Naive thymus-derived CD4-positive, alpha-beta T cell (primary cell): ENCODE measurements at regions of chr19 and their contacts with region 1.

Region 1: GRCh38 chr19:4968462-4969291 is at the start of gene KDM4B:
- DNase-seq: peak; percentile 97 to 100 (median 99)
- ATAC-seq: peak; percentile 94
- H3K4me3 ChIP-seq: peak within 1 kb of the TSS; percentile 69
- H3K4me3 Mint-ChIP-seq: peak within 1 kb of the TSS; percentile 88 to 97 (median 94)
- H3K27ac ChIP-seq: peak within 1 kb of the TSS; percentile 67
- H3K27ac Mint-ChIP-seq: peak within 1 kb of the TSS; percentile 84 to 96 (median 91)
- H3K4me1 ChIP-seq: peaks cover 26 to 29% of the 10 kb centered on the region in 2 donors
- H3K4me1 Mint-ChIP-seq: peaks cover 26 to 40% (median 32%) of the 10 kb centered on the region in 7 donors
- H3K27me3 ChIP-seq: no peaks in the 10 kb centered on the region
- H3K27me3 Mint-ChIP-seq: no peaks in the 10 kb centered on the region
- total RNA-seq, gene KDM4B: 45.8 to 78.0 (median 65.8) TPM

Region 2: GRCh38 chr19:4669723-4670480 is 298.8 kb before region 1 on chr19 and contains the start of gene MYDGF:
- CTCF ChIA-PET with region 1: no interaction called
- POLR2A ChIA-PET with region 1: no interaction called
- intact Hi-C with region 1: loop called in 1 of 2 experiments (anchors 2 kb)
- DNase-seq: peak; percentile 86 to 95 (median 92)
- ATAC-seq: peak; percentile 100
- H3K4me3 ChIP-seq: peak within 1 kb of the TSS; percentile 65
- H3K4me3 Mint-ChIP-seq: peak within 1 kb of the TSS; percentile 77 to 92 (median 86)
- H3K27ac ChIP-seq: peak within 1 kb of the TSS; percentile 81
- H3K27ac Mint-ChIP-seq: peak within 1 kb of the TSS; percentile 28 to 95 (median 84)
- H3K4me1 ChIP-seq: peaks cover 10 to 13% of the 10 kb centered on the region in 2 donors
- H3K4me1 Mint-ChIP-seq: peaks cover 0 to 20% (median 16%) of the 10 kb centered on the region in 7 donors
- H3K27me3 ChIP-seq: no peaks in the 10 kb centered on the region
- H3K27me3 Mint-ChIP-seq: no peaks in the 10 kb centered on the region
- total RNA-seq, gene MYDGF: 28.1 to 81.0 (median 32.1) TPM

Region 3: GRCh38 chr19:4815426-4816201 is 153.1 kb before region 1 on chr19:
- CTCF ChIA-PET with region 1: no interaction called
- POLR2A ChIA-PET with region 1: interaction called, 3 read pairs
- intact Hi-C with region 1: loop called in 1 of 2 experiments (anchors 2 kb)
- DNase-seq: peak; percentile 43 to 77 (median 67)
- ATAC-seq: peak; percentile 86
- H3K4me3 ChIP-seq: peak overlapping the region; percentile 40
- H3K4me3 Mint-ChIP-seq: peak overlapping the region; percentile 68 to 88 (median 81)
- H3K27ac ChIP-seq: peak overlapping the region; percentile 48
- H3K27ac Mint-ChIP-seq: peak overlapping the region; percentile 26 to 91 (median 87)
- H3K4me1 ChIP-seq: peaks cover 4 to 14% of the 10 kb centered on the region in 2 donors
- H3K4me1 Mint-ChIP-seq: peaks cover 11 to 29% (median 18%) of the 10 kb centered on the region in 7 donors
- H3K27me3 ChIP-seq: no peaks in the 10 kb centered on the region
- H3K27me3 Mint-ChIP-seq: no peaks in the 10 kb centered on the region

Region 4: GRCh38 chr19:4909897-4910593 is 58.6 kb before region 1 on chr19:
- CTCF ChIA-PET with region 1: interaction called, 6 read pairs
- POLR2A ChIA-PET with region 1: interaction called, 63 read pairs
- intact Hi-C with region 1: loop called in 1 of 2 experiments (anchors 1 kb)
- DNase-seq: peak; percentile 88 to 96 (median 94)
- ATAC-seq: peak; percentile 95
- H3K4me3 ChIP-seq: peak overlapping the region; percentile 61
- H3K4me3 Mint-ChIP-seq: peak overlapping the region; percentile 93 to 100 (median 99)
- H3K27ac ChIP-seq: peak overlapping the region; percentile 67
- H3K27ac Mint-ChIP-seq: peak overlapping the region in 4 of 9 donors; percentile 86 to 99 (median 89)
- H3K4me1 ChIP-seq: peaks cover 48 to 54% of the 10 kb centered on the region in 2 donors
- H3K4me1 Mint-ChIP-seq: peaks cover 44 to 74% (median 58%) of the 10 kb centered on the region in 7 donors
- H3K27me3 ChIP-seq: no peaks in the 10 kb centered on the region
- H3K27me3 Mint-ChIP-seq: no peaks in the 10 kb centered on the region

Region 5: GRCh38 chr19:5031231-5032100 is 62.8 kb after region 1 on chr19:
- CTCF ChIA-PET with region 1: interaction called, 3 read pairs
- POLR2A ChIA-PET with region 1: no interaction called
- intact Hi-C with region 1: loop called in 1 of 2 experiments (anchors 2 kb)
- DNase-seq: peak; percentile 58 to 86 (median 74)
- ATAC-seq: peak; percentile 91
- H3K4me3 ChIP-seq: no peak overlapping the region
- H3K4me3 Mint-ChIP-seq: no peak overlapping the region
- H3K27ac ChIP-seq: no peak overlapping the region
- H3K27ac Mint-ChIP-seq: peak overlapping the region in 1 of 9 donors; percentile 49
- H3K4me1 ChIP-seq: no peaks in the 10 kb centered on the region
- H3K4me1 Mint-ChIP-seq: peaks cover 0 to 14% (median 12%) of the 10 kb centered on the region in 7 donors
- H3K27me3 ChIP-seq: no peaks in the 10 kb centered on the region
- H3K27me3 Mint-ChIP-seq: no peaks in the 10 kb centered on the region

Region 6: GRCh38 chr19:5690125-5690954 is 721.7 kb after region 1 on chr19 and contains the start of gene RPL36:
- CTCF ChIA-PET with region 1: no interaction called
- POLR2A ChIA-PET with region 1: no interaction called
- intact Hi-C with region 1: loop called in 1 of 2 experiments (anchors 10 kb)
- DNase-seq: peak; percentile 95 to 100 (median 99)
- ATAC-seq: peak; percentile 77
- H3K4me3 ChIP-seq: peak within 1 kb of the TSS; percentile 90
- H3K4me3 Mint-ChIP-seq: peak within 1 kb of the TSS; percentile 90 to 98 (median 94)
- H3K27ac ChIP-seq: peak within 1 kb of the TSS; percentile 85
- H3K27ac Mint-ChIP-seq: peak within 1 kb of the TSS; percentile 89 to 97 (median 93)
- H3K4me1 ChIP-seq: peaks cover 12 to 21% of the 10 kb centered on the region in 2 donors
- H3K4me1 Mint-ChIP-seq: peaks cover 5 to 39% (median 33%) of the 10 kb centered on the region in 7 donors
- H3K27me3 ChIP-seq: no peaks in the 10 kb centered on the region
- H3K27me3 Mint-ChIP-seq: no peaks in the 10 kb centered on the region
- total RNA-seq, gene RPL36: 865 to 1,786 (median 1,037) TPM